ENCODE measurements at regions of chr13 and their contacts with region 1.

Region 1: DNA sequence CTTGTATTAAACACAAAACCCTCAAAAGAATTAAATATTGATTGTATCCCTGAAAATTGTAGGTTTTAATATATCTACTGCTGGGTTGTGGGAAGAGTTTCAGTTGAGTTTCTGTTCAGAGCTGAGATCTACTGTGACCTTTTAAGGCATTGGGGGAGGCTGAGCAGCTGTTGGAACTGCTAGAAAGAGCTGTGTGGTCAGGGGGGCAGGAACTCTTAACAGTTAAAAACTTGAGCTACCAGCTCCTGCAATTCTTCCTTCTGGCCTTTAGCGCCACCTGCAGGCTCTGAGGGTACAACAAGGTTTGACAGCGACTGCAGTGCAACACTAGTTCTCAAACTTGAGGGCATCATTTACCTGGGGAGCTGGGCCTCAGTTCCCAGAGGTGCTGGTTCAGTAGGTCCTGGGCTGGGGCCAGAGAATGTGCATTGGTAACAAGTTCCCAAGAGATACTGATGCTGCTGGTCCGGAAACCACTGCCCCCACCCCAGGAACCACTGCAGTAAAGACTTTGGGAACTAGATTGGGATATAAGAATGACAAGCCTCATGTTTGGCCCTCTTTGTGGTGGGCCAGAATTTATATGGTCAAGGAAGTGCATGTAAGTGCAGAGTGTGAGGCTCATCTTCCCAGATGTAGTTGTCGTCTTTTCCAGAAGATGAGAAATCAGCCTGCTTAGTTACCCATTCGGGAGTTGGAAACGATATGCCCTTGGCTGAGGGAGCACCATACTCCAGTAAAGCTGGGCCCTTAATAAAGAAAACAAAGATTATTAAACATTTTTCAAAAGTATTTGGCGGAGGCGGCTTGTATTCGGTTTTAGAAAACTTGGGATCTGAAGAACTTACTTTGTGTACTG is 2.6 kb downstream of the RNASEH2B start:
- DNase-seq: peak; percentile 90 to 96 (median 93)
- ATAC-seq: peak; percentile 67
- H3K4me3 ChIP-seq: no peak overlapping the region
- H3K4me1 ChIP-seq: peaks cover 12% of the 10 kb centered on the region
- CTCF ChIP-seq: peak; percentile 83

Region 2: DNA sequence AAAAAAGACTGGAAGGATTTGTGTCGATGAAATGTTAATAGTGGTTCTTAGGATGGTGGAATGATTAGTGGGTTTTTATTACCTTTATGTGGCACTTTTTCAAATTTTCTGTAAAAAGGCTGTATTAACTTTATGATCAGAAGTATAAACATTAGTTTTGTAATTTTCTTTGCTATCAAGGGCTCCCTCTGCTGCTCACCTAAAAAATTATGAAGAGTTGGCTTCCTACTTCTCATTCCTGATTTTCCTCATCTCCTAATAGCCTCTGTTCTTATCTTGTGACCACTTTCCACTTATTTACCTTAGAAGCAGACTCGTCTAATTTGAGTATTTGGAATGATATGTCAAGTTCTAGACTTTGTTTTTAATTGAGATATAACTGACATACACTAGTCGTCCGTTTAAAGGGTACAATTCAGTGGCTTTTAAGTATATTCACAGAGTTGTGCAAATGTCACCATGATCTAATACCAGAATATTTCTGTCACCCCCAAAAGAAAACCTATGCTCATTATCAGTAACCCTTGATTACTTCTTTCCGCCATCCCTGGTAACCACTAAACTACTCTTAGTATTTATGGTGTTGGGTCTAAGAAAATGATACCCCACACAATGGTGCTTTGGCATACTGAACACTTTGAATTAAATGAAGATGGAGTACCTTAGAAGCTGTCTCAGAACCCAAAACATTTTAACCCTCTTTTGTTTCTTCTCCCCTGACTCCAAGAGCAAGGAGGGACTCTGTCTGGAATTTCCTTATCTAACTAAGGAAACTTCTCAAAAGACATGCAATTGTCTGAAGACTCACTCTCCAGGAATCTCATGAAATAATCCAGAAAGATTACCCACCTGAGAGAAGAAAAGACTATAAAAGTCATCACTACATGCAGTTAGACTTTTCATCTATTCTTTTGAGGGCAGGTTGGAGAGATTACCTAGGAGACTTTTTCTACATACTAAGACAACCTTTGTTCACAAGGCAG is 380.0 kb before region 1 on chr13:
- intact Hi-C with region 1: loop called in 1 of 2 experiments (anchors 5 kb)
- DNase-seq: peak in 1 of 3 donors; percentile 55
- ATAC-seq: no peak
- H3K4me3 ChIP-seq: no peak overlapping the region
- H3K4me1 ChIP-seq: peaks cover 14% of the 10 kb centered on the region
- CTCF ChIP-seq: no peak

Region 3: GRCh38 chr13:50801087-50801931 is 110.9 kb before region 1 on chr13:
- intact Hi-C with region 1: loop called in 1 of 2 experiments (anchors 10 kb)
- DNase-seq: peak in 2 of 3 donors; percentile 26 to 66
- ATAC-seq: peak; percentile 92
- H3K4me3 ChIP-seq: no peak overlapping the region
- H3K4me1 ChIP-seq: no peaks in the 10 kb centered on the region
- CTCF ChIP-seq: peak; percentile 46

Region 4: DNA sequence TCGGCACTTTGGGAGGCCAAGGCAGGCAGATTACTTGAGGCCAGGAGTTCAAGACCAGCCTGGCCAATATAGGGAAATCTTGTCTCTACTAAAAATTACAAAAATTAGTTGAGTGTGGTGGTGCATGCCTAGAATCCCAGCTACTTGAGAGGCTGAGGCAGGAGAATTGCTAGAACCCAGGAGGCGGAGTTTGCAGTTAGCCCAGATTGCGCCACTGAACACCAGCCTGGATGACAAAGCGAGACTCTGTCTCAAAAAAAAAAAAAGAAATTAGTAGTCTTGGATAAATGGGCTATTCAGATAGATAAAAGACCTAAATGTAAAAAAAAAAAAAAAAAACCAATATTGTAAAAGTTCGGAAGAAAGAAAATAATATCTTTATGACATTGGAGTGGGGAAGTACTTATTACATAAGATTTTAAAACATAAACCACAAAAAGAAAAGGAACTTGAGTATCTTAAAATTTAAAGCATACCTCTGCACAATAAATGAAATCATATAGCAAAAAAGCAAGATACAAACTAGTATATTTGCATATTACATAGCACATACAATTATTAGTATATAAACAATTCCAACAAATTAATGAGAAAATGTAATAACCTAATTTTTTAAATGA is 29.2 kb before region 1 on chr13:
- intact Hi-C with region 1: no loop called
- DNase-seq: no peak
- ATAC-seq: no peak
- H3K4me3 ChIP-seq: no peak overlapping the region
- H3K4me1 ChIP-seq: no peaks in the 10 kb centered on the region
- CTCF ChIP-seq: no peak

Measured in mucosa of descending colon (tissue), 3 donors.